ENCODE measurements at regions of chr1 and their contacts with region 1.

Region 1: DNA sequence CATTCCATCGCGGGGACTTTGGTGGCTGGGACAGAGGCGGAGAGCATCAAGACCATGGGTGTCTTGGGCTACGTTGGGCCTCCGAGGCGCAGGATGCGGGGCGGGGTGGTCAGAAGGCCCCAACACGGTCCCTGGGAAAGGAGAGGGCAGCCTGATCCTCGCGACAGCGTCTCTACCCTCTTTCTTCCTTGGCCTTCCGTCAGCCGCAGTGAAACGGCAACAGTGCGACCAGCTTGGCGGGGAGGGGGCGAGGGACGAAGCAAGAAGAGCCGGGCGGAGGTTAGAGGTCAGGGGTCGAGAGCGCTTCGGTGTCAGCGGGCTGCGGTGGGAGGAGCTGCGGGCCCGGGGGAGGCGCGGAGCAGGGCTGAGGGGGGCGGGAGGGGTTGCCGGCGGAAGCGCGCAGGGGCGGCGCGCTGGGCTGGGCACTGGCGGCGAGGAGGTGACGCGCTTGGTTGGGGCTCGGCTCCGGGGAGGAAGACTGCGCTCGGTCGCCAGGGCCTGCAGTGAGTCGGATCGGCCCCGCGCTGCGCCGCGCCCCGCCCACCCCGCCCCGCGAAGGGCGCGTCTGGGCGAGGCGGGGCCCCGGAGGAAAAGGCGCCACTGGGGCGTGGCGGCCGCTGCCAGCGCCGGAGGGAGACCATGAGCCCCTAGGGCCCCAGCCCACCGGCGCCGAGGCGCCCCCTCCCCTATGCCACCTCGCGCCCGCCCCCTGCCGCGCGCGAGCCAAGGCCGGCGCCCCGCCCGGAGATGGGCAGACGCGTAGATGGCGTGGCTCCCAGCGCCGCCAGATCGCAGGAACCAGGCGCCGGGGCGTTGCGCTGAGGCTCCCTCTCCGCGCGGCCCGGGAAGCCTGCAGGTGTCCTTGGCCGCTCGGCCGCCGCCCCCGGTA is at the start of gene KCNC4:
- DNase-seq: peak; percentile 56
- H3K4me3 Mint-ChIP-seq: peak within 1 kb of the TSS; percentile 72
- H3K27ac Mint-ChIP-seq: no peak within 1 kb of the TSS
- H3K4me1 Mint-ChIP-seq: peaks cover 5% of the 10 kb centered on the region
- H3K27me3 Mint-ChIP-seq: no peaks in the 10 kb centered on the region
- CTCF ChIP-seq: no peak
- total RNA-seq, gene KCNC4: 1.1 and 1.3 TPM in 2 replicates

Region 2: DNA sequence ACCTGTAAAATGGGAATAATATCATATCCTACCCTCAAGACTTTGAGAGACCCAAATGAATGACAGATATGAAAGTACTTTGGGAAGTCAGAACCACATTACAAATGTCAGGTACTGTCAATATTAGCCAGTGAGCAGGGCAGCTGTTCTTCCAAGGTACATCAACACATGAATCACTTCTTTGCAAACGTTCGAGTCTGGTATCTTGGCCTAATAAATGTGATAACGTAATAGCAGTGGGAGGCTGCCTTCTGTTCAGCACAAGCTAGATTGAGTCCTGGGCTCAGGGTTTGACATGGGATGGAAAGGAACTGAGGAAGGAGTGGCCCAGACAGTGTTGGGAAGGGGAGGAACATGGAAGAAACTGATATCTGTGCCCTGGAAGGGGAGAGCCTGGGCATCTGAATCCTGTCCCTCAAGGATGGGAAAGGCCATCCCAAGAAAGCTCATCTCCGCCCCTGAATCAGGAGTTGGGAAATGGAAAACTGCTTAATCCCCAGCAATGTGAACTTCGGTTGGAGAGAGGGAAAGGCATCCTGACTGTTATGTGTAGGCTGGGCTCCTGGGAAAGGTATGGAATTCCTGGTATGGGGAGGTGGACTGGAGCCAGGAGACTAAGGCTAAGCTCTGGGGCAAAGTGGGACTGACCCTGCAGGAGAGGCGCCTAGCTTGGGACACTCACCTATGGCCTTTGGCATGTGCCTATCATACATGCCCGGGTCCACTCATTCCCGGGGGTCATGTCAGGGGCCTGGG is 14.5 kb after region 1 on chr1:
- CTCF ChIA-PET with region 1: interaction called, 18 read pairs
- POLR2A ChIA-PET with region 1: no interaction called
- intact Hi-C with region 1: no loop called
- DNase-seq: no peak
- H3K4me3 Mint-ChIP-seq: no peak overlapping the region
- H3K27ac Mint-ChIP-seq: no peak overlapping the region
- H3K4me1 Mint-ChIP-seq: peaks cover 9% of the 10 kb centered on the region
- H3K27me3 Mint-ChIP-seq: no peaks in the 10 kb centered on the region
- CTCF ChIP-seq: no peak

Region 3: GRCh38 chr1:110237386-110238152 is 27.6 kb after region 1 on chr1:
- CTCF ChIA-PET with region 1: interaction called, 22 read pairs
- POLR2A ChIA-PET with region 1: no interaction called
- intact Hi-C with region 1: no loop called
- DNase-seq: no peak
- H3K4me3 Mint-ChIP-seq: no peak overlapping the region
- H3K27ac Mint-ChIP-seq: no peak overlapping the region
- H3K4me1 Mint-ChIP-seq: no peaks in the 10 kb centered on the region
- H3K27me3 Mint-ChIP-seq: no peaks in the 10 kb centered on the region
- CTCF ChIP-seq: no peak

Region 4: DNA sequence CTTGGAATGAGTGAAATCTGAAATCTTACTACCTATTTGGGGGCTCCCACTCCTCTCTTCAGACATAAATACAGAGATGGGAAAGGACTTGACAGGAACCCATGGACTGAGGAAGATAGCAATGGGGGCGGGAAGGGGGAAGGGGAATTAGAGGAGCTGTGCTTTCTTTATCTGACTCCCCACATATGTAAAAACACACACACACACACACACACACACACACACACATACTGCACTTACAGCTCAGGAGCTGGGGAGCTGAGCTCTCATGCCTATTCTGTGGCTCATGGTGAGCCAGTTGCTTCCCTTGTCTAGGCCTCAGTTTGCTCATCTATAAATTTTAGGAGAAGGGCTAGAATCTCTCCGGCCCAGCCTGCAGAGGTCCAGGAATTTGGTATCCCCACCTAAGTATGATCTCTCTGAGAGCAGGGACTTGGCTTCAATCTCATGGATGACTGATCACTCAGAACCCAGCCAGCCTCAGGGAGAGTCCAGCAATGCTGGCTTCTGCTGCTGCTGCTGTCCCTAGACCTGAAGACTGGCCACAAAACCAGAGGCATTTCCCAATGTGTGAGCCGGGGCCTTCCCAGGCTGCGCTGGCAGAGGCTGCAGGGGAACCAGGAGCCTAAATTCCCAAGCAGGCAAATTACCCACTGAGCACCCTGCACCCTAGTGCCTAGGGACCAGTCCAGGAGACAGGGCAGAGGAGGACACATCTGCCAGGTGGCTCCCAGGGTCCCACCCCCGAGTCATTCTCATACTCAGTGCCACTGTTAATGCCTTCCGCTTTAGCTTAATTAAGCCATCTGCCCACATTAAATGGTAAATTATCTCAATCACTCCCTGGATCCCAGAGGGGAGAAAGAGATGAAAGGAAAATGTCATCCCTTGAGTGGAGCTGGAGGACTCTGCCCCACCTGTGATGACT is 71.7 kb after region 1 on chr1:
- CTCF ChIA-PET with region 1: interaction called, 12 read pairs
- POLR2A ChIA-PET with region 1: no interaction called
- intact Hi-C with region 1: no loop called
- DNase-seq: no peak
- H3K4me3 Mint-ChIP-seq: no peak overlapping the region
- H3K27ac Mint-ChIP-seq: no peak overlapping the region
- H3K4me1 Mint-ChIP-seq: no peaks in the 10 kb centered on the region
- H3K27me3 Mint-ChIP-seq: no peaks in the 10 kb centered on the region
- CTCF ChIP-seq: no peak

Region 5: DNA sequence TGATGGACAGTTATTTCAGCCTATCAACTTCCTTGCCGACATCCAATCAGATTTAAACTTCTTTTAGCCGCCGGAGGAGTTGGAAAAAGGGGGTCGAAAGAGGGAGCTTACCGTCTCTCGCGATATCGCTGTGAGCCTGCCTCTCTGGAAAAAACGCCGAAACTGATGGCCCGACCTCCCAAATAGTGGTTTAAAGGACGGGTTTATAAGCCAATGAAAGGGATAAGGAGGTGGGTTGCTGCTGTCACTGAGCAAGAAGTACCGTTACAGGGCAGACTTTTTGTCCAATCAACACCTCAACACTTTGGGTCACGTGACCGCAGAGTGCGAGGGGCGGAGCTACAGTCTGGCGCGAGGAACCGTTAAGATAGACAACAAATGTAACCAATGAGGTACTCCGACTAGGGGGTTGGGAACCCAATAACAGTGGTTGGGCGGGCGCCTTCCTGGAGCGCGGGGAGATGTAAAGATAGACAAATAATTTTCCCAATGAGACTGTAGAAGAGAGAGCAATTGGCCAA is 129.0 kb after region 1 on chr1 and contains the start of gene RBM15:
- CTCF ChIA-PET with region 1: interaction called, 46 read pairs
- POLR2A ChIA-PET with region 1: interaction called, 4 read pairs
- intact Hi-C with region 1: no loop called
- DNase-seq: peak; percentile 100
- H3K4me3 Mint-ChIP-seq: no peak within 1 kb of the TSS
- H3K27ac Mint-ChIP-seq: no peak within 1 kb of the TSS
- H3K4me1 Mint-ChIP-seq: peaks cover 39% of the 10 kb centered on the region
- H3K27me3 Mint-ChIP-seq: no peaks in the 10 kb centered on the region
- CTCF ChIP-seq: no peak
- total RNA-seq, gene RBM15: 31.4 and 35.9 TPM in 2 replicates

Region 6: GRCh38 chr1:110433803-110434202 is 223.8 kb after region 1 on chr1:
- CTCF ChIA-PET with region 1: interaction called, 10 read pairs
- POLR2A ChIA-PET with region 1: no interaction called
- intact Hi-C with region 1: no loop called
- DNase-seq: peak; percentile 86
- H3K4me3 Mint-ChIP-seq: no peak overlapping the region
- H3K27ac Mint-ChIP-seq: peak overlapping the region; percentile 80
- H3K4me1 Mint-ChIP-seq: peaks cover 15% of the 10 kb centered on the region
- H3K27me3 Mint-ChIP-seq: peaks cover 26% of the 10 kb centered on the region
- CTCF ChIP-seq: peak; percentile 30

Region 7: GRCh38 chr1:110619412-110620249 is 409.7 kb after region 1 on chr1:
- CTCF ChIA-PET with region 1: interaction called, 4 read pairs
- POLR2A ChIA-PET with region 1: no interaction called
- intact Hi-C with region 1: loop called (anchors 10 kb)
- DNase-seq: peak; percentile 81
- H3K4me3 Mint-ChIP-seq: no peak overlapping the region
- H3K27ac Mint-ChIP-seq: no peak overlapping the region
- H3K4me1 Mint-ChIP-seq: peaks cover 6% of the 10 kb centered on the region
- H3K27me3 Mint-ChIP-seq: peaks cover 74% of the 10 kb centered on the region
- CTCF ChIP-seq: peak; percentile 94